Dendritic cell treated with granulocyte-macrophage colony-stimulating factor and Interleukin-4, amounts not matched to agents 40 ng/mL and 50 ng/mL, for 4 days (primary cell): ENCODE measurements at regions of chr7 and their contacts with region 1.

Region 1: DNA sequence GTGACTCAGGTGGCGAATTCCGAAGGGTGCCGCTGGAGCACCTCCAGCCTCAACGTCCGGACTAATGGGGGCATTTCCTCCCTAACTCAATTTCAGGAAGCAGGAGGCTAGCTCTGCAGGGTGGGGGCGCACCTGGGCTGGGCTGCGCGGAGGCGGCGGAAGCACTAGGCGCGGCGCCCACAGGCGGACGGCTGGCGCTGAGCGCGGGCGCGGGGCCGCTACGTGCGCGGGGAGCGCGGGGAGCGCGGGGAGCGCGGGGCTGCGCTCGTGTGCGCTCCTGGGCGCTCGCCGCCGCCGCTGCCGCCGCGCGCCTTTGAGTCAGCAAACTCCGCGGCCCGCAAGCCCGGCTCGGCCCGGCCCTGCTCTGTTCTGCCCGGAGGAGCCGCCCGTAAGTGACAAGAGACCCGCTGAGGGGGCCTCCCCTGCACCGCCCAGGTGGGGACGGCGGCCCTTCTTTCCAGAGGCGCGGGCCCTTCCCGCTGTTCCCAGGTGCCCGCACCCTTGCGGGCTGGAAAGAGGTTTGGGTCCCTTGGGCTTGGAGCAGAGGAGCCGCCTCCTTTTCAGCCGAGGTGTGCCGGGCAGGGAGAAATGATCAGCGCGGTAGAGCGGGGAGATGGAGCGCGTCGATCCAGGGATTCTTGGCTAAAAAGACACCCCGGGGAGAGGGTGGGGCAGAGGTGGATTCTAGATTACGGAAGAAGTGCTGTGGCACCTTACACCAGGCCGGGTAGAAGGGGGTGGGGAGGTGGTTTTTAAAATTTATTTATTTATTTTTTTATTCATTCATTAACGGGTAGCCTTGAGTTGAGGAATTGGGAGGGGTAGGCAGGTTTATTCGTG is at the start of gene SNX10:
- H3K4me3 Mint-ChIP-seq: peak within 1 kb of the TSS; percentile 93
- H3K27ac Mint-ChIP-seq: peak within 1 kb of the TSS; percentile 92
- H3K4me1 Mint-ChIP-seq: peaks cover 68% of the 10 kb centered on the region
- H3K27me3 Mint-ChIP-seq: no peaks in the 10 kb centered on the region

Region 2: GRCh38 chr7:26307226-26307625 is 15.3 kb after region 1 on chr7:
- intact Hi-C with region 1: loop called (anchors 2 kb)
- H3K4me3 Mint-ChIP-seq: peak overlapping the region; percentile 38
- H3K27ac Mint-ChIP-seq: peak overlapping the region; percentile 84
- H3K4me1 Mint-ChIP-seq: peaks cover 84% of the 10 kb centered on the region
- H3K27me3 Mint-ChIP-seq: no peaks in the 10 kb centered on the region

Region 3: GRCh38 chr7:26329520-26330255 is 37.8 kb after region 1 on chr7:
- intact Hi-C with region 1: loop called (anchors 5 kb)
- H3K4me3 Mint-ChIP-seq: peak overlapping the region; percentile 42
- H3K27ac Mint-ChIP-seq: peak overlapping the region; percentile 88
- H3K4me1 Mint-ChIP-seq: peaks cover 72% of the 10 kb centered on the region
- H3K27me3 Mint-ChIP-seq: no peaks in the 10 kb centered on the region

Region 4: DNA sequence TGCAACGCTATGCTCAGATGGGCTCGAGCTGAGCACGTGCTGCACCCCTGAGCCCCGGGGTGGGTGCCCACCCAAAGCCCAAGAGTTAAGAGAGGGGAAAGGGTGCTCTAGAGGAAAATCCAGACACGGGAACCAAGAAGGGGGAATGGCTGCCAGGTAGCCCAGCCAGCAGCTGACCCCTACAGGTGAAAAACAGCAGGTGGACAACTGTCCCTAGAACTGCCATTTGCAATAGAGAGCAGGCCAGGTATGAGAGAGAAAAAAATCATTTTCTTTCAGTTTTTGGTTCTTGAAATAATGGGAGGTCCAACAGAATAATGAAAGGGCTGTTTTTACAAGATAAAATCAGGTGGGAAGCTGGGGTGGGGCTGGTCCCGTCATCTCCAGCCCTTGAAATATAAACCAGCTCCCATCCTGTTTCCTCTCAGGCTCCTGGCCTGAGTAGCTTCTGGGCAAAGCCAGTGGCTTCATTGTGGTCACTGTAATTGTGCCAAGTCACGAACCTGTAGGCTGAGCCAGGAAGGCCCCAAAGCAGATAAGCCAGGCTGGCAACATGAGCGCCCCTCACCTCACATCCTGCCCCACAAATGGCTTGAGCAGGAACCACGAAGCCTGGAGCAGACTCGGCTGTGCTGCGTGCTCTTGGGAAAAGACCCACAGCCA is 257.5 kb after region 1 on chr7:
- intact Hi-C with region 1: no loop called
- H3K4me3 Mint-ChIP-seq: no peak overlapping the region
- H3K27ac Mint-ChIP-seq: no peak overlapping the region
- H3K4me1 Mint-ChIP-seq: peaks cover 5% of the 10 kb centered on the region
- H3K27me3 Mint-ChIP-seq: peaks cover 24% of the 10 kb centered on the region